Gastrocnemius medialis (tissue), 4 donors: ENCODE measurements at regions of chr7 and their contacts with region 1.

Region 1: GRCh38 chr7:116671681-116672595 is at the start of gene MET:
- DNase-seq: peak; percentile 81 to 89
- ATAC-seq: peak; percentile 76 to 82
- H3K4me3 ChIP-seq: peak within 1 kb of the TSS; percentile 77 to 83 (median 78)
- H3K27ac ChIP-seq: peak within 1 kb of the TSS; percentile 95 to 96 (median 96)
- H3K4me1 ChIP-seq: peaks cover 46 to 51% of the 10 kb centered on the region in 2 donors
- H3K27me3 ChIP-seq: no peaks in the 10 kb centered on the region
- CTCF ChIP-seq: peak; percentile 70 to 82 (median 75)
- POLR2A ChIP-seq: peak; percentile 88 to 92
- total RNA-seq, gene MET: 15.9 to 36.8 (median 28.7) TPM

Region 2: GRCh38 chr7:116630932-116631745 is 40.8 kb before region 1 on chr7:
- in situ Hi-C with region 1: no loop called
- intact Hi-C with region 1: loop called (anchors 1 kb)
- DNase-seq: peak; percentile 91 to 97
- ATAC-seq: peak; percentile 82 to 89
- H3K4me3 ChIP-seq: peak overlapping the region in 1 of 4 donors; percentile 10
- H3K27ac ChIP-seq: peak overlapping the region; percentile 81 to 92 (median 90)
- H3K4me1 ChIP-seq: peaks cover 58 to 62% of the 10 kb centered on the region in 2 donors
- H3K27me3 ChIP-seq: no peaks in the 10 kb centered on the region
- CTCF ChIP-seq: no peak
- POLR2A ChIP-seq: peak; percentile 79 to 87

Region 3: GRCh38 chr7:116706668-116707126 is 34.8 kb after region 1 on chr7:
- in situ Hi-C with region 1: no loop called
- intact Hi-C with region 1: loop called (anchors 5 kb)
- DNase-seq: peak; percentile 24 to 52
- ATAC-seq: peak; percentile 86 to 97
- H3K4me3 ChIP-seq: peak overlapping the region; percentile 21 to 40 (median 34)
- H3K27ac ChIP-seq: peak overlapping the region; percentile 55 to 78 (median 71)
- H3K4me1 ChIP-seq: peaks cover 60 to 81% of the 10 kb centered on the region in 2 donors
- H3K27me3 ChIP-seq: no peaks in the 10 kb centered on the region
- CTCF ChIP-seq: no peak
- POLR2A ChIP-seq: no peak

Region 4: DNA sequence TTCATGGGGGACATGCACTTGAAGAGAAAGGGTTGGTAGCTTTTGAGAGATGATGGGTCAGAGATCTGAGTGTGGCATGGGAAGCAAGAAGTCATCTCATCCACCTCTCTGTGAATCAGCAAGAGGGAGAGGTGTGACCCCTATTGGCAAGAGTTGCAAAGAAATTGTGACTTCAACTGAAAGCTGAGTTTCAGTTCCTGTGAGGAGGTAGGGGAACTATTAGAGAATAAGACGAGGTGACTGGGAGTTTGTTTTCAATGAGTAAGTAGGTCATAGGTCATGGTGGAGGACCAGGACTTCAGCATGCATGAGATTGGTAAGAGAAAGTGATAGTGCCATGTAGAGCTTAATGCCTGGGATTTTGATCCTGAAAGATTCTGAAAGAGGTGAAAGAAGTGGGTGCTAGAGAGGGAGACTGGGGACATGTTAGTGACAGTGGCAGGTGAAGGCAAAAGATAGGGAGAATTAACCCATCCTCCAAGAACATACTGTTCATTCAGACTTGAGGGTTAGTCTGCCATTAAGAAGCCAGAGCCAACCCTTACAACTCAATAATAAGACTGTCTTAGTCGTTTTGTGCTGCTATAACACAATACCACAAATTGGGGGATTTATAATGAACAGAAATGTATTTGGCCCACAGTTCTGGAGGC is 115.0 kb after region 1 on chr7:
- in situ Hi-C with region 1: no loop called
- intact Hi-C with region 1: loop called (anchors 5 kb)
- DNase-seq: no peak
- ATAC-seq: peak; percentile 40 to 51
- H3K4me3 ChIP-seq: no peak overlapping the region
- H3K27ac ChIP-seq: peak overlapping the region; percentile 41 to 71 (median 54)
- H3K4me1 ChIP-seq: peaks cover 23 to 24% of the 10 kb centered on the region in 2 donors
- H3K27me3 ChIP-seq: no peaks in the 10 kb centered on the region
- CTCF ChIP-seq: peak in 1 of 5 experiments; percentile 11
- POLR2A ChIP-seq: no peak

Region 5: GRCh38 chr7:116802746-116803152 is 130.8 kb after region 1 on chr7:
- in situ Hi-C with region 1: loop called in 2 of 4 experiments (anchors 5 kb)
- intact Hi-C with region 1: loop called (anchors 1 kb)
- DNase-seq: peak; percentile 28 to 37
- ATAC-seq: peak; percentile 18 to 27
- H3K4me3 ChIP-seq: no peak overlapping the region
- H3K27ac ChIP-seq: peak overlapping the region; percentile 81 to 93 (median 88)
- H3K4me1 ChIP-seq: peaks cover 45 to 52% of the 10 kb centered on the region in 2 donors
- H3K27me3 ChIP-seq: no peaks in the 10 kb centered on the region
- CTCF ChIP-seq: peak; percentile 18 to 32 (median 31)
- POLR2A ChIP-seq: no peak

Region 6: DNA sequence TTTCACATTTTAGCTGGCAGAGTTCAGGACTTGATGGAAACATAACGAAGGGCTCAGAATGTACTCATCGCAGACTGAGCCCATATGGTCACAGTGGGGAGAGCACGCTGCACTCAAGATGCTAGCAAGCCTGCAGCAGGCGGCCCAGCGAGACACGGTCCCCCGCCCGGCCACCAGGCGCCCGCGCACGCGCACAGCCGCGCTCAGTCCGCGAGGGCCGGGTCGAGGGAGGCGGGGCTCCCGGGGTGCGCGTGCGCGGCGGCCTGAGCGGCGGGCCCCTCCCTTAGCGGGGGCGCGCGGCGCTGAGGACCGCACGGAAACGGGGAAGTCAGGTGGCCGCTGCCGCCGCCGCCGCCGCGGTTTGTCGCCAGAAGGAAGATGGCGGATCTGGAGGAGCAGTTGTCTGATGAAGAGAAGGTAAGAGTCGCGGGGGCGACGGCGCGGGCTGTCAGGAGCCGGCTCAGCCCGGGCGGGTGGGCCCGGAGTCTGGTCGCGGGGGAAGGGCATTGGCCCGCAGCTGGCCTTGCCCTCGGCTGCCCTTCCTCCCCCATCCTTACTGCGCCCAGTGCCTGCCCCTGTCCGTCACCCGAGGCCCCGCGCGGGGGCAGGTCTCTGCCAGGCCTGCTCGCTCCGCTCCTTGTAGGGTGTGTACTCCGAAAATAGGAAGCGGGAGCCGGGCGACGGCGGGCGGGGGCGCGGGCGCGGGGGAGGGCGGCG is 190.5 kb after region 1 on chr7 and contains the start of gene CAPZA2:
- in situ Hi-C with region 1: no loop called
- intact Hi-C with region 1: loop called (anchors 2 kb)
- DNase-seq: peak; percentile 82 to 90
- ATAC-seq: peak; percentile 93
- H3K4me3 ChIP-seq: peak within 1 kb of the TSS; percentile 67 to 94 (median 82)
- H3K27ac ChIP-seq: peak within 1 kb of the TSS; percentile 92 to 99 (median 96)
- H3K4me1 ChIP-seq: peaks cover 29 to 38% of the 10 kb centered on the region in 2 donors
- H3K27me3 ChIP-seq: no peaks in the 10 kb centered on the region
- CTCF ChIP-seq: peak; percentile 52 to 94 (median 82)
- POLR2A ChIP-seq: peak; percentile 83 to 90
- total RNA-seq, gene CAPZA2: 110 to 158 (median 137) TPM

Region 7: DNA sequence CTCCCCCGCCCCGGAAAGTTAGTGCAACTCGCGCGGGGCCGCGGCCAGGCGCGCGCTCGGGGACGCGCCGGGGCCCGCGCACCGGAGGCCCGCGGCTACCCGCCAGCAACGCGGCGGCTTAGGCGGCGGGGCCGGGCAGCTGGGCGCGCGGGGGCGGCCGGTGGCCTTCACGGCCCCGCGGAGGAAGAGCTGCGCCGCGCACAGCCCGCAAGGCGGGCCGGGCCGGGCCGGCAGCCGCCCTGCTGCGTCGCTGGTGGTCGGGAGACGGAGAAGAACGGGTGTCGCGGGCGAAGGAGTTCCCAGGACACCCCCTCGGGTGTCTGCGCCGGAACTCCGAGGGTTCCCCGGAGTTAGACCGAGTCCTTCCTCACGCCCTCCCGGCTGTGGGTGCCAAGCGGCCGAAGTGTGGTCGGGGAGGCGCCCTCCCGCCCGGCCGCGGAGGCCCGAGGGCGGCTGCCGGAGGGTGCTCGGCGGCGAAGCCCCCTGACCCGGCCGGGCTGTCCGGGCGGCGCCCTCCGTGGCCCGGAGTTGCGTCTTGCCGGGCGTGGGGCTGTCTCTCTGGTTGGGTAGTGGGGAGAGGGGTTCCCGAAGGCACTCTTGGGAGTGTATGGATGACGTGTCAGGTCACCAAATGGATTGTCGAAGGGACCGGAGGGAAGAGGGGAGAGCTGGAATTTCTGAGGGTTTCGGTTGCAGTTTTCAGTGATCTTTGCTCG is 281.9 kb after region 1 on chr7:
- in situ Hi-C with region 1: no loop called
- intact Hi-C with region 1: loop called (anchors 10 kb)
- DNase-seq: peak; percentile 43 to 62
- ATAC-seq: peak; percentile 82 to 86
- H3K4me3 ChIP-seq: peak overlapping the region; percentile 74 to 88 (median 83)
- H3K27ac ChIP-seq: peak overlapping the region; percentile 94 to 98 (median 96)
- H3K4me1 ChIP-seq: peaks cover 29 to 33% of the 10 kb centered on the region in 2 donors
- H3K27me3 ChIP-seq: no peaks in the 10 kb centered on the region
- CTCF ChIP-seq: no peak
- POLR2A ChIP-seq: peak; percentile 68 to 79